Heart left ventricle (tissue), 16 donors: ENCODE measurements at regions of chr2 and their contacts with region 1.

Region 1: DNA sequence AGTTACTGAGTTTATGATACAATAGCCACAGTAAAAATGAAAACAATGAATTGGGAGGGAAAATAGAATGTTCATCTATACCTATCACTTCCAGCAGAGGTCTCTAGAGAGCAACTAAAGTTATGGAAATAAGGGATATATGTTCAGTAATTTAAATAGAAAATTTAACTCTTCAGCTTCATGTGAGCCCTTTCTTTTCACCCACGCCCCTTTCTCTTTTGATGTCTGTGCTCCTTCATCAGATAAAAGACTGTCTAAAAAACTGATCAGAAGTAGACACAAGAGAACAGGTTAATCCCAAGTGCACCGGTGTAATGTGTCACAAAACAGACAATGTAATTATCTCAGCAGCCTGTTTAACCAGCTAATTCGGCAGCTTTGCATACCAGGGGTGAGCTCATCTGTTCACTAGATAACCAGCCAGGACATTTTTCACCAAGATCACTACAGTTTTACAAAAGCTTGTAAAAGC is 238.5 kb upstream of the ERBB4 start:
- DNase-seq: no peak
- ATAC-seq: no peak
- H3K4me3 ChIP-seq: no peak overlapping the region
- H3K27ac ChIP-seq: no peak overlapping the region
- H3K4me1 ChIP-seq: peaks cover 0 to 4% (median 0%) of the 10 kb centered on the region in 12 donors
- H3K27me3 ChIP-seq: no peaks in the 10 kb centered on the region
- CTCF ChIP-seq: peak; percentile 42 to 80 (median 68)
- POLR2A ChIP-seq: no peak

Region 2: GRCh38 chr2:212841460-212841859 is 64.4 kb after region 1 on chr2:
- intact Hi-C with region 1: no loop called
- DNase-seq: no peak
- ATAC-seq: no peak
- H3K4me3 ChIP-seq: no peak overlapping the region
- H3K27ac ChIP-seq: no peak overlapping the region
- H3K4me1 ChIP-seq: peaks cover 0 to 3% (median 0%) of the 10 kb centered on the region in 12 donors
- H3K27me3 ChIP-seq: no peaks in the 10 kb centered on the region
- CTCF ChIP-seq: no peak
- POLR2A ChIP-seq: no peak

Region 3: GRCh38 chr2:212870574-212870973 is 93.5 kb after region 1 on chr2:
- intact Hi-C with region 1: no loop called
- DNase-seq: no peak
- ATAC-seq: no peak
- H3K4me3 ChIP-seq: no peak overlapping the region
- H3K27ac ChIP-seq: no peak overlapping the region
- H3K4me1 ChIP-seq: no peaks in the 10 kb centered on the region
- H3K27me3 ChIP-seq: no peaks in the 10 kb centered on the region
- CTCF ChIP-seq: no peak
- POLR2A ChIP-seq: no peak

Region 4: GRCh38 chr2:212892193-212892592 is 115.1 kb after region 1 on chr2:
- intact Hi-C with region 1: loop called in 8 of 10 experiments (anchors 1 to 10 kb)
- DNase-seq: no peak
- ATAC-seq: peak in 1 of 4 donors; percentile 29
- H3K4me3 ChIP-seq: no peak overlapping the region
- H3K27ac ChIP-seq: no peak overlapping the region
- H3K4me1 ChIP-seq: no peaks in the 10 kb centered on the region
- H3K27me3 ChIP-seq: no peaks in the 10 kb centered on the region
- CTCF ChIP-seq: peak in 7 of 12 donors; percentile 9 to 49 (median 40)
- POLR2A ChIP-seq: no peak

Region 5: GRCh38 chr2:213010106-213010779 is 233.2 kb after region 1 on chr2:
- intact Hi-C with region 1: no loop called
- DNase-seq: no peak
- ATAC-seq: no peak
- H3K4me3 ChIP-seq: no peak overlapping the region
- H3K27ac ChIP-seq: no peak overlapping the region
- H3K4me1 ChIP-seq: no peaks in the 10 kb centered on the region
- H3K27me3 ChIP-seq: no peaks in the 10 kb centered on the region
- CTCF ChIP-seq: no peak
- POLR2A ChIP-seq: no peak

Region 6: DNA sequence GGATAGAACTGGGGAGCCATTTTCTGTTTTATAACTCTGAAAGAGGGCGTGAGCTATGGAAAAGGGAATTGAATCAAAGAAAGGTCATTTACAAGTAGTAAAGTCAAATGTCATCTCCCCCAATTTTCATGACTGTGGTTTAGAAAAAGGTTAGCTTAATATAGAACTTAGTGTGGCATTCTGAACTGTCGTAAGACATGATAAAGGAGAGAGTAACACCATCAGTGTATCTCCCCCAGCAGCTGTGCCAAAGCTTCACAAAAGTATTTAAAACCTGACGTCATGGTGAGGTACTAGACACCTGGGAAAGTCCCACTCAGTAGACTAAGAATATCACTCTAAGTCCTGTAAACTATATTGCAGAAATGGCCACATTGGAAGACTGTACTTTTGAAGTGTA is 380.2 kb after region 1 on chr2:
- intact Hi-C with region 1: loop called (anchors 1 to 5 kb)
- DNase-seq: no peak
- ATAC-seq: peak in 2 of 4 donors; percentile 56 to 75
- H3K4me3 ChIP-seq: no peak overlapping the region
- H3K27ac ChIP-seq: no peak overlapping the region
- H3K4me1 ChIP-seq: peaks cover 0 to 13% (median 2%) of the 10 kb centered on the region in 12 donors
- H3K27me3 ChIP-seq: no peaks in the 10 kb centered on the region
- CTCF ChIP-seq: no peak
- POLR2A ChIP-seq: no peak